Activated B cell treated with CpG ODN at 0.5 μM for 24 hours (primary cell): ENCODE measurements at regions of chr2 and their contacts with region 1.

Region 1: GRCh38 chr2:165203689-165204559 is at the start of gene SCN3A:
- DNase-seq: no peak
- ATAC-seq: peak; percentile 57
- H3K4me3 Mint-ChIP-seq: peak within 1 kb of the TSS; percentile 80
- H3K27ac Mint-ChIP-seq: peak within 1 kb of the TSS; percentile 73
- H3K4me1 Mint-ChIP-seq: peaks cover 29% of the 10 kb centered on the region
- H3K27me3 Mint-ChIP-seq: no peaks in the 10 kb centered on the region
- CTCF ChIP-seq: no peak
- total RNA-seq, gene SCN3A: 2.2 and 2.6 TPM in 2 replicates

Region 2: DNA sequence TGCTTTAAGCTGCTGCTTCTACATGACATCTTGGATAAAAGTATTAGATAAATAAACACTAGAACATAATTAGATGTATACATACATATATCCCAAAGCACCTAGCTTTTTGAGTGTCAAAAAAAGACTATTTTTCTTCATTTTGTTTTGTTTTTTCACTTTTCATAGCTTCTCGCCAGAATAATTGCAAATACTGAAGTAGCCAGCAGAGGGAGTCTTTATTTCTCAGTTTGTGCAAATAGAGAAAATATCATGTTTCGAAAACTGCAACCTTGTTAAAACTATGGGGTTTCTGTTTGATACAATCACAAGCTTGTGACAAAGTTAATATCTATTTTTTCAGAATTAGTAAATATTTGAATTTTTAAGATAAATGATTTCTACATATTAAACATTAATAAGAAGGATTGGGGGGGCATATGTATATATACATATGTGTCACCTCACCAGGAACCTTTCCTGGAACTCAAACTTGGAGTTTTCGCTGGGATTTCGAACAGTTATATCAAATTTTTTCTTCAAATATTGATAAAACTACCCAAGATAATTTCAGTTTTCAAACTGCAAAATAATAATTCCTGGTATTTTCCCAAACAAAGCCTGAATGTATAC is 643.6 kb before region 1 on chr2:
- CTCF ChIA-PET with region 1: interaction called, 5 read pairs
- POLR2A ChIA-PET with region 1: no interaction called
- intact Hi-C with region 1: loop called (anchors 2 kb)
- DNase-seq: no peak
- ATAC-seq: no peak
- H3K4me3 Mint-ChIP-seq: no peak overlapping the region
- H3K27ac Mint-ChIP-seq: no peak overlapping the region
- H3K4me1 Mint-ChIP-seq: peaks cover 6% of the 10 kb centered on the region
- H3K27me3 Mint-ChIP-seq: no peaks in the 10 kb centered on the region
- CTCF ChIP-seq: peak; percentile 81

Region 3: DNA sequence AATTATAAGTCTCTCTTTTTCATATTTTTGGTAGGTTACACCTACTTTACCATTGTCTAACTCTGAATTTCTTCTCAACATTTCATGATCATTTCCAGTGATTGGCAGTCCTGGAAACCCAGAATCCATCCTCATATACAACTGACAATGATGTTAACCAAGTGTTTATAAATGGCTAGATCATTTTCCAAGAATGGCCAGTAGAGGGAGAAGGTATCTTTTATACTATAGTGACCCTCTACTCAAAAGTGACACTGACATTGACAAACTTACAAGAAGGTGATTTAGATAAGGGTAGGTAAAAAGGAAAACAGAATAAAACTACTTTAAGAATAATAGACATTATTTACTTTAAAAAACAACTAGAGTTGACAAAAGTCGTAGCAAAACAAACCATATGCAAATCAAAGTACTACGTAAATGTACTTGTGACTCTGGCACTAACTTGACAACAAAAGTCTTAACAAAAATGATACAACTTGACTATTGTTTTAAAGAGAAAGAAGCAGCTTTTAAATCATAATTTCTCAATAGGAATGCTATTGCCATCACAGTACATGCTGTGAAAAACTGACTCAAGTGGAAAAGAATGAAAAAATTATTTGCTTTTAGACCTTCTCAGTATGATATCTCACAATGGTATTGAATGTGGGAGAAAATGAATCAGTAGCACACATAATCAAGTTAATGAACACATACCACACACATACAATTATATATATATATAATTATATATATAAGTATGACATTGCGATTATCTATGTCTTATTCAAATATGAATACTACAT is 506.1 kb before region 1 on chr2:
- CTCF ChIA-PET with region 1: no interaction called
- POLR2A ChIA-PET with region 1: no interaction called
- intact Hi-C with region 1: loop called (anchors 10 kb)
- DNase-seq: no peak
- ATAC-seq: peak; percentile 50
- H3K4me3 Mint-ChIP-seq: no peak overlapping the region
- H3K27ac Mint-ChIP-seq: no peak overlapping the region
- H3K4me1 Mint-ChIP-seq: no peaks in the 10 kb centered on the region
- H3K27me3 Mint-ChIP-seq: no peaks in the 10 kb centered on the region
- CTCF ChIP-seq: no peak

Region 4: DNA sequence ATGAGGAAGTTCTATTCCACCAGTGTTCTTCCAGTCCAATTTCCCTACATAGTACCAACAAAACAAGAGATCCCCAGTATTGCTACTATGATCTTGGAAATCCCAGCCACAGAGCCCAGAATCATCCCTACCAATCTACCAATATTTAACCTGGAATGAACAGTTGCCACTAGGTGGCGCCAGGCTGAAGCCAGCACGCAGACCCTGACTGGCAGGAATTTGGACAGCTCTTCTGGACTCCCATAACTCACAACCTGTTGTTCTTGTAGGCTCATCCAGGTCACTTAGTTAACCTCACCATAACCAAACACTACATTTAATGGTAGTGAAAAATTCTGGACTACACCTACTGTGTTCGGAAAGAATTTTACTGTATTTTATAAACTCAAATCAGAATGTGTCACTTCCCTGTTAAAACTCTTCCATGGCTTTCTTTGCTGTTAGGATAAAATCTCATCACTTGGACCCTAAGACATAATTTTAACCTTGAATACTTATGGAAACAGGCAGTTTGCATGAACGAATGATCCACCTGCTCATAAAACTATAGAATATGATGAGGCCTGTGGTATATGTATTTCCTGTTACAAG is 188.8 kb before region 1 on chr2:
- CTCF ChIA-PET with region 1: interaction called, 104 read pairs
- POLR2A ChIA-PET with region 1: interaction called, 7 read pairs
- intact Hi-C with region 1: loop called (anchors 1 kb)
- DNase-seq: no peak
- ATAC-seq: peak; percentile 35
- H3K4me3 Mint-ChIP-seq: no peak overlapping the region
- H3K27ac Mint-ChIP-seq: no peak overlapping the region
- H3K4me1 Mint-ChIP-seq: no peaks in the 10 kb centered on the region
- H3K27me3 Mint-ChIP-seq: no peaks in the 10 kb centered on the region
- CTCF ChIP-seq: peak; percentile 82

Region 5: DNA sequence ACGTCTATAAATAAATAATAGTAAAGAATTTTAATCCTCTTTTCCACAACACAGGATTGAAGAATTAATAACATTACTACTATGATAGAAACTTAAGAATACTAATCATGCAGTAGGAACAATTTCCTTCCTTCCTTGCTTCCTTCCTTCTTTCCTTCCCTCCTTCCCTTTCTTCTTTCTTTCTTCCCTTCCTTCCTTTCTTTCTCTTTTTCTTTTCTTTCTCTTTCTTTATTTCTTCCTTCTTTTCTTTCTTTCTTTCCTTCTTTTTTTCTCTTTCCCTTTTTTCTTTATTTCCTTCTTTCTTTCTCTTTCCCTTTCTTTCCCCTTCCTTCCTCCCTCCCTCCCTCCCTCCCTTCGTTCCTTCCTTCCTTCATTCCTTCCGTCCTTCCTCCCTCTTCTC is 77.7 kb before region 1 on chr2:
- CTCF ChIA-PET with region 1: interaction called, 3 read pairs
- POLR2A ChIA-PET with region 1: interaction called, 12 read pairs
- intact Hi-C with region 1: no loop called
- DNase-seq: no peak
- ATAC-seq: no peak
- H3K4me3 Mint-ChIP-seq: no peak overlapping the region
- H3K27ac Mint-ChIP-seq: no peak overlapping the region
- H3K4me1 Mint-ChIP-seq: no peaks in the 10 kb centered on the region
- H3K27me3 Mint-ChIP-seq: peaks cover 2% of the 10 kb centered on the region
- CTCF ChIP-seq: no peak

Region 6: DNA sequence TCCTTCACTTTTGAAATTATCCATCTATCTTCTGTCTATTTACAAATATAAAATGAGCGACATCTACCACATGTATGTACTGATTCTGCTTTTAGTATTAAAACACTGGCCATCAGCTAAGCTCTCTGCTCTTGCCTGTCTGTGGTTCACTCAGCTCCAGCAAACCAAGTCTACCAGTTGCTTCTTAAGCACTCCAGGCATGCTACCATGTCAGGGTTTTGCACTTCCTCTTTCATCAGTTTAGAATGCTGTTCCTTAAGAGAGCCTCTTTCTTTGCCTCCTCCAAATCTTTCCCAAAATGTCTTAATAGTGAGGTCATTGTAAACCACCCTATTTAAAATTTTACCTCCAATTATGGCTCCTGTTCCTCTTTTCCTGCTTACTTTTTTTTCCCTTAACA is 59.6 kb before region 1 on chr2:
- CTCF ChIA-PET with region 1: interaction called, 9 read pairs
- POLR2A ChIA-PET with region 1: no interaction called
- intact Hi-C with region 1: loop called (anchors 2 kb)
- DNase-seq: no peak
- ATAC-seq: peak; percentile 56
- H3K4me3 Mint-ChIP-seq: no peak overlapping the region
- H3K27ac Mint-ChIP-seq: no peak overlapping the region
- H3K4me1 Mint-ChIP-seq: peaks cover 13% of the 10 kb centered on the region
- H3K27me3 Mint-ChIP-seq: no peaks in the 10 kb centered on the region
- CTCF ChIP-seq: no peak

Region 7: DNA sequence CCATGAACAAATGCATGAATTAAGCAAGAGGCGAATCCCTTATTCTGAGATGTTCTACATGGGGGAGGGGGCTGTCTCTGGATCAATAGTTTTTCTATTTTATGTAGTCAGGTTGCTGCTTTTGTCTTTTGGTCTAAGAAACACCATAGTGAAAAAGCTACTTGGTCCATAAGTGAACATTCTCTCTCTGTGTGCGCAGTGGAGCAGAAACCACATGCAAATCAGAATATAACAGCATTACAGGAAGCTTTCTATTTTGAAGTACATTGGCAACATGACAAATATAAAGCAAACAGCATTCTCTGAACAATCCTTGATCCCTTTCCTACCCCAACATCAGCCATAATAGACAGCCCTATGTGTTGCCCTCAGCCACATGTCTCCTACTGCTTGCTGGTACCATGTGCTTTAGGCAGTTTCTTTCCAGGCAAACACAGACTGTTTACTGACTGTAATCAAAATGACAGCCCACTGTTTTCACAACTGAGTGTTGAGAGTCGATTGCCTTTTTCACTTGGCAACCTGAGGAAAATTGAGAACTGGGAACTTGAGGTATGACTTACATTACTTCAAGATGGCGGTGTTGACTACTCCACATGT is 10.6 kb before region 1 on chr2:
- CTCF ChIA-PET with region 1: interaction called, 3 read pairs
- POLR2A ChIA-PET with region 1: interaction called, 5 read pairs
- intact Hi-C with region 1: loop called (anchors 1 kb)
- DNase-seq: peak; percentile 15
- ATAC-seq: peak; percentile 93
- H3K4me3 Mint-ChIP-seq: peak overlapping the region; percentile 29
- H3K27ac Mint-ChIP-seq: peak overlapping the region; percentile 57
- H3K4me1 Mint-ChIP-seq: peaks cover 68% of the 10 kb centered on the region
- H3K27me3 Mint-ChIP-seq: no peaks in the 10 kb centered on the region
- CTCF ChIP-seq: no peak